Vagina (tissue), 2 donors: ENCODE measurements at regions of chr5 and their contacts with region 1.

Region 1: DNA sequence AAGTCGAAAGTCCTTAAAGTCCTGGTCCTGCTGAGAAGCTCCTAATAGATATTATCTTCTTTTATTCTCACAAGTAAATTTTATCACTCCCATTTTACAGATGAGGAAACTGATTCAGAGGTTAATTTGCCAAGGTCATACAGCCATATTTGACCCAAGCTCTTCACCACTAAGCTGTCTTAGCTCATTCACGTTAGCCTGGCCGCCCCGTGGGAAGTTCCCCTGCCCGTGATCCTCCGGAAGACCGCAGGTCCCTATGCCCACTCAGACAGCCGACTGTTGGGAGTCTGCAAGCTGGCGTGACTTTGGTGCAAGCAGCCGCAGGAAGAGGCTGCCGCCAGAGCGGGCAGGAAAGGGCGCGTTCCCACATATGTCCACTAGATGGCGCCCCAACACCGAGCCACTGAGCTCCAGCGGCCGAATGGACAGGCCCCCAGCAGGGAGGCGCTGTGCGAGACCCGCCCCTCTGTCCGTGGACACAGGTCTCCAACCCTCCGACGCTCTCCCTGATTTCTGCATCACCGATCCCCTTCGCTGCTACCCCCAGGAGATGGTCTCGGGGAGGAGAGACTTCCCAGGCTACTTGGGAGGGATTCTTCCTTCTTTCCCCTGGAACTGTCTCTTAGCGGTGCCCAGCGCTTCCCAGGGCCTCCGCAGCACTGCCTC is 10.0 kb upstream of the ARAP3 start:
- DNase-seq: no peak
- H3K4me3 ChIP-seq: peak overlapping the region; percentile 22 to 32
- H3K27ac ChIP-seq: no peak overlapping the region
- H3K4me1 ChIP-seq: peaks cover 11% of the 10 kb centered on the region
- H3K27me3 ChIP-seq: no peaks in the 10 kb centered on the region
- CTCF ChIP-seq: peak; percentile 98 to 99 (median 98)
- POLR2A ChIP-seq: no peak

Region 2: GRCh38 chr5:141716009-141716408 is 24.0 kb after region 1 on chr5:
- intact Hi-C with region 1: no loop called
- DNase-seq: no peak
- H3K4me3 ChIP-seq: no peak overlapping the region
- H3K27ac ChIP-seq: no peak overlapping the region
- H3K4me1 ChIP-seq: no peaks in the 10 kb centered on the region
- H3K27me3 ChIP-seq: no peaks in the 10 kb centered on the region
- CTCF ChIP-seq: no peak
- POLR2A ChIP-seq: no peak

Region 3: GRCh38 chr5:141958113-141958512 is 266.1 kb after region 1 on chr5 and contains the start of gene PCDH12:
- intact Hi-C with region 1: loop called (anchors 5 kb)
- DNase-seq: no peak
- H3K4me3 ChIP-seq: no peak within 1 kb of the TSS
- H3K27ac ChIP-seq: no peak within 1 kb of the TSS
- H3K4me1 ChIP-seq: no peaks in the 10 kb centered on the region
- H3K27me3 ChIP-seq: no peaks in the 10 kb centered on the region
- CTCF ChIP-seq: no peak
- POLR2A ChIP-seq: no peak
- total RNA-seq, gene PCDH12: 3.2 TPM

Region 4: DNA sequence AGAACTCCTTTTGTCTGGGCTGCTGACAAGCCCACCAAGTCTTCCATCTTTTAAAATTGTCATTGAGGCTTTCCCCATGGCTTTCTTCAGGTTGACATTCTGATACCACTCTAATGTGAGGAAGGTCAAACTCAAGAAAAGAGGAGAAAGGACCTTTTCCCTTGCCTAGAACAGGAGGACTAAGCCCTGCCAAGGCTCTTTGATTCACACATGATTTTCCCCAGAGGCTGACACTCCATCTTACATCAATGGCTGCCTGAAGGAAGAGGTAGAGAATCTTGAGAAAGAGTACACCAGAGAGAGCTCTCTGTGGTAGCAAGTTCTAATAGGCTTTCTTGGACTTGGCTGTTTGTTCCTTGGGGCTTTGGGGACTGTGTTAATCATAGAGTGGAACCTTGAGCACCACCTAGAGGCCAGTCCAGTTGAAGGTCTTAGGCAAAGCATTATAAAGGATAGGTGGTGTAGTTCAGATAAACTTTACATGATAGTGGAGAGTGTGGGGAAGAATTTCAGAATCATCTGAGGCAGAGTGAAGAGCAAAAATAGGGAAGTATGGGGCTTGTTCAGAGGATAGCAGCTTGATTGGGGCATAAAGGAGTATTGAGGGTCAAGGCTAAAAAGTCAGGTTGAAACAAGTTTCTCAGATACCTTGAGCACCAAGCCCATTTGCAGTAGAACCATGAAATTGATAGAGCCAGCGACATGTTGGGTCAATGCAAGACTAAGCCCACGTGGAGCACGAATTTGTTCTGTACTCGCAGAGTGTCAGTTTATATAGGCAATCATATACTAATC is 453.3 kb after region 1 on chr5:
- intact Hi-C with region 1: loop called (anchors 10 kb)
- DNase-seq: no peak
- H3K4me3 ChIP-seq: no peak overlapping the region
- H3K27ac ChIP-seq: no peak overlapping the region
- H3K4me1 ChIP-seq: no peaks in the 10 kb centered on the region
- H3K27me3 ChIP-seq: no peaks in the 10 kb centered on the region
- CTCF ChIP-seq: peak in 2 of 3 experiments; percentile 43 to 49
- POLR2A ChIP-seq: no peak